ENCODE measurements at regions of chr4 and their contacts with region 1.

Region 1: DNA sequence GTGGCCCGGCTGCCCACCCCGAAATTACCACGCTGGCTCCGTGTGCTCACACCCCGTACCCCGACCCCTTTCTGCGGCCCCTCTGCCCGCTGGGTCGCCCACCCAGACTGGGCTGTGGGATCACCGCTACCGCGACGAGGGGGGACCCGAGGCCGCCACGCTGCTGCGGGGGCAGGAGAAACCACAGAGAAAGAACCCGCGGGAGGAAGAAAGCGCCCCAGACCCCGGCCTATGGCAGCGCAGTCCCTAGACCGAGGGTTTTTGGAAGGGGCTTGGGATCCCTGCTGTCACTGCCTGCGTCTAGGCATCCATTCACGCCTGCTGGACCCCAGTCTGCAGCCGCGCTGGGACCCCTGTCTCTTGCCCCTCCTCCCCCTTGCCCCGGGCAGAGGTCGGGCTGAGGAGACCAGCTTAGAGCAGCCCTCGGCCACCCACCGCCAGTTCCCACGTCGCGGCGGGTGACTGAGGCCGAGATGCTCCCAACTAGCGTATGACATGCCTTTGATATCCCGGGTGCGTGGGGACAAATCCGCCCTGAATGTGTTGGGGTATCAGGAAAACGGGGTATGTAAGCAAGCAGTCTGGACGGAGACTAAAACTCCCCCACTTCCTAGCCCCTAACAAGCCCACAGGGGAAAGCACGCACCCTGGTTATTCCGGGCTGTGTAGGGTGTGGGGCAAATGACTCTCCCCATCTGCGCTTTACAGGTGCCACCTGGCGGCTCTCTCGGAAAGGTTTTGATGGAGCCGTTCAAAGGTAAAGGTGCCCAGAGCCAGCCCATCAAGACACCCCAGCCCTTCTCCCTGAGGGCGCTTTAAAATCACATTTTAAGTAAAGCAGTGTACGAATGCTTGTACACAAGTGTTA is 862 bp upstream of the INPP4B start:
- DNase-seq: peak; percentile 59 to 73
- H3K4me3 ChIP-seq: peak overlapping the region; percentile 91
- H3K27ac ChIP-seq: no peak overlapping the region
- H3K4me1 ChIP-seq: peaks cover 22% of the 10 kb centered on the region
- H3K27me3 ChIP-seq: no peaks in the 10 kb centered on the region
- CTCF ChIP-seq: peak; percentile 72

Region 2: DNA sequence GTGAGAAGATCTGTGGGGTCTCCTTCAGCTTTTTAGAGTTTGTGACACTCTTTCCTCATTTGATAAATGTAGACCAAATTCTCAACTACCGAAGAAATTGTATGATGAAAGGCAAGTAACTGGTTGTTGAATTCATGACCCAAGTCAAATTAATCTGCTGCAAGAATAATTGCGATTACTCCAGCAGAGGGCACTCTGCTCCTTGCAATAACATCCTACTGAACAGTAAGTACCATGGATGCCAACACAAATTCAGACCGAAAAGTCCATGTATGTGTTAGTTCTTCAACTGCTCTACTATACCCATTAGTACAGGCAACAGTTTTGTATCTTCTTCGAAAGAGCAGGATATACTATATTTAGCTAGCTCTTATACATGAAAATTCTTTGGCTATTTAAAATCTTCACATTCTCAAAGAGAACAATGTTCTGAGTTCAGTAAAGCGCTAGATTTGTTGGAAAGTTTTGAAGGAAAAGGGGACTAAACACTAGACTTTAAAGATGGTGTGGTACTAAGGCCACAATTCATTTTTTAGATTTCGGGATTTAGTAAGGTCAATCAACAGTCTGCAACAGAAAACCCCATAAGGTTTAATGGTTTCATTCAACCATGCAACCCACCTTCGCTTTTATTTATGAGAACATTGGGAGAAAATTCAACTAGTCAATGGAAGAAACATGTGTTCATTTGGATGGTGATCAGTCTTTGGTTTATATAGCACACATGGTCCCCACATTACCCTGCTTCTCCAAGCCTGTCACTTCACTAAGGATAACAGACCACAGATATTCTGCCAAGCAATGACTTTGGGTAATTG is 1985.4 kb before region 1 on chr4:
- CTCF ChIA-PET with region 1: no interaction called
- POLR2A ChIA-PET with region 1: no interaction called
- intact Hi-C with region 1: loop called (anchors 5 kb)
- DNase-seq: peak; percentile 48 to 51
- H3K4me3 ChIP-seq: no peak overlapping the region
- H3K27ac ChIP-seq: no peak overlapping the region
- H3K4me1 ChIP-seq: peaks cover 13% of the 10 kb centered on the region
- H3K27me3 ChIP-seq: no peaks in the 10 kb centered on the region
- CTCF ChIP-seq: peak; percentile 79

Region 3: DNA sequence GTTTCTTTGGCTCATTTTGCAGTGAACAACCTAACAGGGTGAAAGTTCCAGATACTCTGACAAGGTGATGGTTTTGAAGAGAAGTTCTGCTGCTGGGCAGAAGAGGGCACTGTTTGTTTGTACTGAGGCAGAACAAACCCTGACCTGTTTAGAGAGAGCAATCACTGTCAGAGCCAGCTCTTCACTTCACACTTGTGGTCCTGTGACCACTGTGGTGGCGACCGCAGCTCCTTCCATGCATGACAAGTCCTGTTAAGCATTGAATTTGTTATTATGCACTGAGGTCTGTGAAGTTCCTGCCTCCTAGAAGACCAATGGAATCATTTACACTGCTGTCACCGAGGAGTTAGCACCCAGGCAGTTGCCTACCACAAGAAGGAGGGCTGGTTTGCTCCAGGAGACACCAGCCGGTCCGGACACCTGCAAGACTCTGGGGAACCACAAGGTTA is 1539.7 kb before region 1 on chr4:
- CTCF ChIA-PET with region 1: no interaction called
- POLR2A ChIA-PET with region 1: no interaction called
- intact Hi-C with region 1: loop called (anchors 1 kb)
- DNase-seq: peak; percentile 43
- H3K4me3 ChIP-seq: no peak overlapping the region
- H3K27ac ChIP-seq: no peak overlapping the region
- H3K4me1 ChIP-seq: no peaks in the 10 kb centered on the region
- H3K27me3 ChIP-seq: no peaks in the 10 kb centered on the region
- CTCF ChIP-seq: peak; percentile 66

Region 4: DNA sequence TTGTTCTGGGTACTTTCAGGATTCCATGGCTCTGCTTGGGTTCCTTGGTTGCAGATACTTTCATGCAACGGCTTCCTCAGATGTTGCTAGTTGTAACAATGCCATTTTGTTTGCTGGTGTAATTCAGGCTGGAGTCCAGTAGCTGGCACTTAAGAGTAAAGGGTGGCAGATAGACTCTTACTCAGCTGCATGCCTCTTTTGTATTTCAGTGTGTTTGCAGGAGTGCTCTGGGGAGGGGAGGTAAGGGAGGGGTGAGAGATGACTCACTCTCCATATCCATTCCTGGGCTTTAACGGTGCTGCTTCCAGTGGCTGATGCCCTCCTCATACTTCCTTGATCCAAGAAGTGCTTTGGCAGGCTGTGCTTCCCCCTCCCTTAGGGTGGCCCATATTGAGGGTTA is 1471.1 kb before region 1 on chr4:
- CTCF ChIA-PET with region 1: no interaction called
- POLR2A ChIA-PET with region 1: no interaction called
- intact Hi-C with region 1: loop called (anchors 10 kb)
- DNase-seq: peak; percentile 64 to 68
- H3K4me3 ChIP-seq: no peak overlapping the region
- H3K27ac ChIP-seq: no peak overlapping the region
- H3K4me1 ChIP-seq: no peaks in the 10 kb centered on the region
- H3K27me3 ChIP-seq: no peaks in the 10 kb centered on the region
- CTCF ChIP-seq: peak; percentile 55

Region 5: DNA sequence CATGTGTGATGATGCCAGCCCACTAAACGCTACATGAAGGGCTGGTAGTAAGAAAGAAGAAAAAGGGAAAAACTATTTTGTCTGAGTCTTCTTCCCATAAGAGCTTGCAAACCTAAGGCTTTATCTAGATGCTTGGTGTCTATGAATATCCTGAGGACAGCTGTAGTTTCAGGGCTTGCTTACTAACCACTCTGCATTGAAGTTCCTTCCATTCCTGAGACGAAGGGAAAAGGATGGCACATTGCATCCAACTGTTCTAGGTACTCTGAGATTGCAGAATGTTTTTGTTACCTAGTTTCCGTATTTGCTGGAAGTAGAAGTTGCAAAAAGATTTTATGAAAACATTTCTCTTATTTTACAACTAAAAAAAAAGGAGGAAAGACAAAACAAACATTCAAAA is 665.9 kb before region 1 on chr4:
- CTCF ChIA-PET with region 1: interaction called, 10 read pairs
- POLR2A ChIA-PET with region 1: no interaction called
- intact Hi-C with region 1: no loop called
- DNase-seq: no peak
- H3K4me3 ChIP-seq: no peak overlapping the region
- H3K27ac ChIP-seq: no peak overlapping the region
- H3K4me1 ChIP-seq: no peaks in the 10 kb centered on the region
- H3K27me3 ChIP-seq: no peaks in the 10 kb centered on the region
- CTCF ChIP-seq: no peak

Region 6: DNA sequence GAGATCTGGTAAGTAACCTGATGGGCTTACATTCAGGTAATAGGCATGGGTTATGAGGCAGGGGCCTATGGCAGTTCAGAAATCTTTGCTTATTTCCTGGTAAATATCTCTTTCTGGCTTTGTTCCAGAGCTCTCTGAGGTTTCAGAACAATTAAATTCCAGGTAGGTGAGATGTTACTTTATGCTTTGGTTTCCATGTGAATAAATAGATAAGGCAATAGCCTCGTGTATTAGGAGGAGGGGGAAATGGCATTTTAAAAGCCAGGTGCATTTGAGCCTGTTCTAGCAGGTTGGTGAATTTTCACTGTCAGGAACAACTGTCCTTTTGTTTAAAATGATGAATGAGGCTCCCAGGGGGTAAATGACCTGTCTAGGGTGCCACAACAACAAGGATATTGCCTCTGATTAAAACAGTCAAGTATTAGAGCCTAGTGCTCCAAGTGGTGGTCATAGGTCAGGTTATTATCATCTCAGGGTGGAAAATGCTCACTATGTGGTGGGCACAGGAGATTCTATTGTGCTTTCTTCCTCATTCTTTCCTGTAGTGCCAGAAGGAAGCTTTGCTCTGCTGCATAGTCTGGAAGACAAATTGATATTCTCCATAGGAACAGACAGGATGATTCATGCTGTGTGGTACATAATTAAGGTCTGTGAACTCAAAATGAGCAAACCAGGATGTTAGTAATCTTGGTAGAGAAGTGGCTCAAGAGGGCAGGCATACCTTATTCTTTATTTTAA is 297.1 kb before region 1 on chr4:
- CTCF ChIA-PET with region 1: no interaction called
- POLR2A ChIA-PET with region 1: no interaction called
- intact Hi-C with region 1: loop called (anchors 1 kb)
- DNase-seq: peak; percentile 67 to 98
- H3K4me3 ChIP-seq: no peak overlapping the region
- H3K27ac ChIP-seq: peak overlapping the region; percentile 99
- H3K4me1 ChIP-seq: peaks cover 48% of the 10 kb centered on the region
- H3K27me3 ChIP-seq: no peaks in the 10 kb centered on the region
- CTCF ChIP-seq: no peak